Esophagus squamous epithelium (tissue), 5 donors: ENCODE measurements at regions of chr4 and their contacts with region 1.

Region 1: DNA sequence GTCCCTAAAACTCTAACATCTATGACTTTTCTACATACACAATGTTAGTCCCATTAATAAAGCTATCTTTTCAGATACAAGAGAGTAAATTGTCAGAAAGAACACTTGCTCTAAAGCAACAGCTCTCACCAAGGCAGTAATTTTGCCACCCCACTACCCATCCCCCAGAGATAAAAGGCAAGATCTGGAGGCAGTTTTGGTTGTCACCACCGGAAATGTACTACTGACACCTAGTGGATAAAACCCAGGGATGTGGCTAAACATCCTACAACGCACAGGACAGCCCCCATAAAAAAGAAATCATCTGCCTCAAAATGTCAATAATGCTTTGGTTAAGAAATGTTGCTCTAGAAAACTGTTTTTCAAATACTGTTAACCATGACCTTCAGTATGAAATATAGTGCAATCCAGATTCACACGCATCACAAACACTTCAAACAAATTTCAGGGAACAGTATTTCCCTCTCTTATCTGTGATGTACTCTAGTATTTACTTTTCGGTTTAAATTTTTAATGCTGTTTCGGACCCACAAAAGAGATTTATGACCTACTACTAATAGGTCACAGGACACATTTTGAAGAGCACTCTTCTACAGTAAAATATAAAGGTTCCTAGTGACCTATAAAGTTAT is 5.1 kb downstream of the FBXL5 start:
- DNase-seq: no peak
- H3K4me3 ChIP-seq: peak overlapping the region in 2 of 4 donors; percentile 3 to 27
- H3K27ac ChIP-seq: peak overlapping the region in 3 of 4 donors; percentile 20 to 42 (median 25)
- H3K4me1 ChIP-seq: peaks cover 23 to 88% (median 47%) of the 10 kb centered on the region in 3 donors
- H3K27me3 ChIP-seq: no peaks in the 10 kb centered on the region
- CTCF ChIP-seq: peak; percentile 31 to 72 (median 61)
- POLR2A ChIP-seq: no peak

Region 2: GRCh38 chr4:15488658-15489470 is 161.2 kb before region 1 on chr4:
- intact Hi-C with region 1: loop called (anchors 10 kb)
- DNase-seq: no peak
- H3K4me3 ChIP-seq: no peak overlapping the region
- H3K27ac ChIP-seq: peak overlapping the region in 2 of 4 donors; percentile 13 to 56
- H3K4me1 ChIP-seq: peaks cover 0 to 6% (median 0%) of the 10 kb centered on the region in 3 donors
- H3K27me3 ChIP-seq: no peaks in the 10 kb centered on the region
- CTCF ChIP-seq: no peak
- POLR2A ChIP-seq: no peak